H1 (cell line): ENCODE measurements at regions of chr6 and their contacts with region 1.

Region 1: GRCh38 chr6:28969129-28969528 is 36.0 kb downstream of the ZNF311 start:
- DNase-seq: peak in 1 of 2 experiments; percentile 76
- H3K4me3 ChIP-seq: no peak overlapping the region
- H3K27ac ChIP-seq: no peak overlapping the region
- H3K4me1 ChIP-seq: no peaks in the 10 kb centered on the region
- H3K27me3 ChIP-seq: no peaks in the 10 kb centered on the region
- CTCF ChIP-seq: peak; percentile 55 to 73 (median 60)
- EP300 ChIP-seq: no peak
- POLR2A ChIP-seq: no peak
- RAD21 ChIP-seq: peak; percentile 15 to 46; a peak in 3 of 4 replicates

Region 2: GRCh38 chr6:28981833-28982475 is 12.8 kb after region 1 on chr6:
- CTCF ChIA-PET with region 1: interaction called, 19 read pairs
- POLR2A ChIA-PET with region 1: interaction called, 3 read pairs
- DNase-seq: peak in 1 of 2 experiments; percentile 89
- H3K4me3 ChIP-seq: peak overlapping the region; percentile 91 to 100 (median 96)
- H3K27ac ChIP-seq: no peak overlapping the region
- H3K4me1 ChIP-seq: peaks cover 0 to 12% (median 2%) of the 10 kb centered on the region in 4 experiments; a peak in 5 of 7 replicates
- H3K27me3 ChIP-seq: peaks cover 0 to 2% (median 0%) of the 10 kb centered on the region in 4 experiments; a peak in 2 of 7 replicates
- CTCF ChIP-seq: peak in 1 of 3 experiments; percentile 10; a peak in 1 of 4 replicates
- EP300 ChIP-seq: no peak
- POLR2A ChIP-seq: no peak
- RAD21 ChIP-seq: no peak; a peak in 1 of 4 replicates